ENCODE measurements at regions of chr3 and their contacts with region 1.

Region 1: GRCh38 chr3:182683453-182683852 is 109.9 kb upstream of the ATP11B start:
- DNase-seq: peak in 2 of 3 donors; percentile 26 to 56
- ATAC-seq: peak; percentile 82 to 89
- H3K4me3 ChIP-seq: peak overlapping the region; percentile 70
- H3K27ac ChIP-seq: no peak overlapping the region
- H3K4me1 ChIP-seq: no peaks in the 10 kb centered on the region
- H3K27me3 ChIP-seq: no peaks in the 10 kb centered on the region

Region 2: DNA sequence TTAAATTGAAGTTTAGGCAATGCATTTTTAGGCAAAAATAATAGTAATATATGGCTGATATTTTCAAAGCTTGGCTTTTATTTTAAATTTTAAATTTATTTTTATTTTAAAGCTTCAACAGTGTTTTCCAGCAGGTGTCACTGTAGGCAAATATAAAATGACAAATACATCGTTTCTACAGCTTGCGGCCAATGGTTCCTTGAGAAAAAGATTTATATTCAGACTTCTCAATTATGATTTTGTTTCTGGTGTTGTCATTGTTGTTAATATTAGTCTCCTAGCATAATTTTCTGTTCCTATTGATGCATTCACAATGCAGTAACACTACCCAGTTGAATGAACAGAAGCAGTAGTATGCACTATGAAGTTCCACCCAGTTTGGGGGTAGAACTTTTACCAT is 1473.2 kb before region 1 on chr3:
- intact Hi-C with region 1: loop called in 1 of 4 experiments (anchors 10 kb)
- DNase-seq: no peak
- ATAC-seq: no peak
- H3K4me3 ChIP-seq: no peak overlapping the region
- H3K27ac ChIP-seq: no peak overlapping the region
- H3K4me1 ChIP-seq: no peaks in the 10 kb centered on the region
- H3K27me3 ChIP-seq: peaks cover 4% of the 10 kb centered on the region

Region 3: GRCh38 chr3:182644800-182645433 is 38.5 kb before region 1 on chr3:
- intact Hi-C with region 1: no loop called
- DNase-seq: no peak
- ATAC-seq: no peak
- H3K4me3 ChIP-seq: no peak overlapping the region
- H3K27ac ChIP-seq: no peak overlapping the region
- H3K4me1 ChIP-seq: no peaks in the 10 kb centered on the region
- H3K27me3 ChIP-seq: no peaks in the 10 kb centered on the region

Measured in right cardiac atrium (tissue), 5 donors.